Mucosa of descending colon (tissue), 3 donors: ENCODE measurements at regions of chr17 and their contacts with region 1.

Region 1: DNA sequence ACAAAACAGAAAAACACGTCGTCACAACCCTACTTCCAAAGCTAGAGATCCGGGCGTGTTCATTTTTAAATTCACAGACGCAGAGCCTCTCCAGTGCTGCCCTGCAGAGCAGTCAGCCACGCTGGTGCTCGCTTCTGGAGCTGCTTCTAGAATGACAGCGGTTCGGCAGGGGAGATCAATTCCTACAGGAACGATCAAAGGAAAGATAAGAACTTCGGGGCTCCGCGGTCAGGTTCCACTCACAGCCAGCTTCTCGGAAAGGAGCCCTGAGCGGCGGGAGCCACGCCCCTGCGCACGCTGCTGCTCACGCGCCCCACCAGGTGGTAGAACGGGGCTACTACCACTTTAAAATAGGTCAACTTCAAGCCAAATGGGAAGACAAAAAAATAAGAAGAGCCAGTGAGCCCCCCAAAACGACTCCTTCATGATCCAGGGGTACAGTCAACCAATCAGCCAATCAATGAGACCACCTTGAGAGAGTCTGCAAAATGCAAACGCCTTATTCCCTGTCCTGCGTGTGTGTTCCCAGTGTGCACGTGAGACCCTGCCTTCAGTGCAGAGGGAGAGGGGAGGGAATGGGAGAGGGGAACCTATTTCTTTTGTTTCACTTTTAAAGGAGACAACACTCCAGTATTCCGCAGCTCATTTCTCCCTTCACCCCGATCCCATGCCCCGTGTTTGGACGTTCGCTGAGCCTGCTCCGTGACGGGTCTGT is 209.7 kb downstream of the RBFOX3 start:
- DNase-seq: peak in 2 of 3 donors; percentile 76 to 79
- ATAC-seq: peak; percentile 96
- H3K4me3 ChIP-seq: no peak overlapping the region
- H3K4me1 ChIP-seq: no peaks in the 10 kb centered on the region
- CTCF ChIP-seq: peak; percentile 86

Region 2: DNA sequence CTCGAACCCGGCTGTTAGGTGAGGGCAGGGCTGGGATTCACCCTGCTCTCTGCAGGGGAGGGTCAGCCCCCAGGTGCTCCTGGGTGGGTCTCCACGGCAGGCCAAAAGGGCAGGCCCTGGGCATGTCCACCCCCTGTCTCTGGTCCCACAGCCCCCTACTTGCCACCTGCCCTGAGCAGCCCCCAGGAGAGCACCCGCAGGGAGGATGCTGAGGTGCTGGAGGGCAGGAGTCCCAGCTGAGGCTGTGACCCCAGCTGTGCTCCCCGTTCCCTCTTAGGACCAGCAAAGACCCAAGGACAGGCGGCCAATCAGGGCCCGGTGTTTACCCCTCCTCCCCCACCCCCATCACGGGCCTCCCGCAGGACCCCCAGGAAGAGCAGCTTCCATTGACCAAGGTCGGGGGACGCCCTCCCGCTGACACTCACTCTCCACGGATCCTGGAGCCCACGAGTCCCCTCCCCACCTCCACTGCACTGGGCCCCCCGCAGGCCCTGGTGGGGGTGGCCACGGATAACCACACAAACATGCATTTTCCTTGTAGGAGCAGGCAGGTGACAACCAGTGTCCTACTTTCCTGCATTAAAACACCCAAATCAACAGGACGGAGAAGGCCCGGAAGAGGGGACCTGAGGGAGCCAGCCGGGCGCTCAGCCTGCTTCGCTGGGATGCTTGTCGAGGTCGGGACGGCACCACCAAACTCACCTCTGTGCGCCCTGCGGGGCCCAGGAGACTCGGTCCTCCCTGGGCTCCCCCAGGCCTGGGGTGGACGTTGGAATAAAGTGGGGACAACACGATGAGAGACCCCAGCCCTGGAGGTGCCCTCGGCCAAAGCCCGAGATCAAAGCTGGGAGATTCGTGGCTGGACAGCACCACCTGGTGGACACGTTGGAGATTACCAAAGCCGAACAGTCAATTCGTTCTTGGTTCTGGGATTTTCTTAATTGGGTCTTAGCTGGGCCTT is 307.1 kb after region 1 on chr17:
- intact Hi-C with region 1: loop called in 1 of 2 experiments (anchors 10 kb)
- DNase-seq: peak in 2 of 3 donors; percentile 49 to 57
- ATAC-seq: peak; percentile 64
- H3K4me3 ChIP-seq: no peak overlapping the region
- H3K4me1 ChIP-seq: no peaks in the 10 kb centered on the region
- CTCF ChIP-seq: peak; percentile 73